ENCODE measurements at regions of chr3 and their contacts with region 1.

Region 1: DNA sequence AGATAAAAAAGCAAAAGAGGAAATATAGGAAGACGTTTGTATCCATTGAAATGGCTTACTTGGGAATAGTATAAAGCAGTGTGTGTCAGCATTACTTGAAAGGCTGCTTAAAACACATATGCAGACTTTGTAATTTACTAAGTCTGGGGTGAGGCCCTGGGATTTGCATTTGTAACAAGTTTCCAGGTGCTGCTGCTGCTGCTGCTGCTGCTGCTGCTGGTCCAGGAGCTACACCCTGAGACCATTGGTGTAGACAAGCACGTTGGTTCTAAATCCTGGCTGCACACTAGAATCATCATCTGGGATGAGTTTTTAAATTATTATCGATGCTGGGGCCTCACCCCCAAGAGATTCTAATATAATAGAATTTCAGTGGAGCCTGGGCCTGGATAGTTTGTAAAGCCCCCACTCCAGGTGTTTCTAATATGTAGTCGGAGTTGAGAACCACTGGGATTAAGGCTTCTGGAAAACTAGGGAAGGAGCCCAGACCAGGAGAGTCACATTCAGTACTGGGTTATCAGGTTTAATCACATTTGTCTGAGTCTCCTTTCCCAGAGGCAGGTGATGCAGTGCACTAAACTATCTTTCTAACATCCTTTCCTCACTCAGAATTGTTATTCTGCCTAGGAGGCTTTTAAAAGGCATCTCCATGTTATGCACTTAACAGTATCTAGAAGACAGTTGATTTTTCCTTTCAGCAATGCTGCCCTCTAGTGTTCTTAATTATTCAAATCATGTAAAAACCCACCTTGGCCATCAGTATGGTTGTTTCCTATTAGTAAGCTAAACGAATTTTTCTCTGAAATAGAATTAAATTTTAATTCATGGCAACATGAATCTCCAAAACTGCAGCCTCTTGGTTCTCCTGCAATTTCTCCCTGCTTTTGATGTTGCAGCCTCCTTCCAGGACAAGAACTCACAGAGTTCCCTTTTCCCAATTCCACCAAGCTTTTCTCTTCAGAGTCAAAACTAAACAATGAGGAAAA is 45.4 kb downstream of the SSR3 start:
- DNase-seq: peak; percentile 67 to 83 (median 75)
- H3K4me3 ChIP-seq: no peak overlapping the region
- H3K27ac ChIP-seq: no peak overlapping the region
- H3K4me1 ChIP-seq: no peaks in the 10 kb centered on the region
- H3K27me3 ChIP-seq: peaks cover 0 to 3% (median 0%) of the 10 kb centered on the region in 5 experiments

Region 2: GRCh38 chr3:156098437-156099035 is 410.9 kb before region 1 on chr3:
- CTCF ChIA-PET with region 1: no interaction called
- POLR2A ChIA-PET with region 1: no interaction called
- DNase-seq: no peak
- H3K4me3 ChIP-seq: no peak overlapping the region
- H3K27ac ChIP-seq: no peak overlapping the region
- H3K4me1 ChIP-seq: no peaks in the 10 kb centered on the region
- H3K27me3 ChIP-seq: no peaks in the 10 kb centered on the region

Region 3: DNA sequence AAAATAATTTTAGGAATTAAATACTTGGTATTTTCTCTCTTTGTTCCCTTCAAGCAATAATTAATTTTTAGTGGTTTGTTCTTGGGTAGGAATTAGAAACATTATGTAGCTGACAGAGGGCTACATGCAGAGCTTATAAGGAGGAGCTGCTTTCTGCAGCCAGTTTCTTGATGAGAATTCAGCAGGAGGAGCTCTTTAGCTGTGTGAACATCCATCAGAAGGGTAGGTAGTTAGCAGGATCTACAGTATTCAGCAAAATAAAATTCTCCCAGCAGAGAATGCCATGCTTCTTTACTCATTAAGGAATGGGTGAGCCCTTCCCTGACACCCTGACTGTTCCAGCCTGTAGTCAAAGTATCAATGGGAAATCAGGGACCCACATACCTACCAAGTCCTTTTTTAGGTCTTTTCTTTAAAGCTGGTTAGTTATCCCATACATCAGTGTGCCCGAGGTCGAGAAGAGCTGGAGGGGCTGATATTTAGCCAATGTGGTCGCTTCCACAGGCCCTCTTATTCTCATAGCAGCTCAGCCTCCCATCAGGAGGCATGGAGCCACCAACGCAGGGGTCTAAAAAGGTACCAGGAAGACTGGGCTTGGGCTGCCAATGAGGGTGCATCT is 335.1 kb before region 1 on chr3:
- CTCF ChIA-PET with region 1: interaction called, 14 read pairs
- POLR2A ChIA-PET with region 1: no interaction called
- DNase-seq: peak; percentile 8 to 39 (median 19)
- H3K4me3 ChIP-seq: no peak overlapping the region
- H3K27ac ChIP-seq: no peak overlapping the region
- H3K4me1 ChIP-seq: no peaks in the 10 kb centered on the region
- H3K27me3 ChIP-seq: no peaks in the 10 kb centered on the region

Region 4: GRCh38 chr3:156413293-156413892 is 96.1 kb before region 1 on chr3:
- CTCF ChIA-PET with region 1: no interaction called
- POLR2A ChIA-PET with region 1: no interaction called
- DNase-seq: no peak
- H3K4me3 ChIP-seq: no peak overlapping the region
- H3K27ac ChIP-seq: no peak overlapping the region
- H3K4me1 ChIP-seq: no peaks in the 10 kb centered on the region
- H3K27me3 ChIP-seq: peaks cover 0 to 1% (median 0%) of the 10 kb centered on the region in 5 experiments

Region 5: GRCh38 chr3:156449712-156450574 is 59.5 kb before region 1 on chr3:
- CTCF ChIA-PET with region 1: interaction called, 31 read pairs
- POLR2A ChIA-PET with region 1: interaction called, 3 read pairs
- DNase-seq: peak; percentile 38 to 48 (median 39)
- H3K4me3 ChIP-seq: no peak overlapping the region
- H3K27ac ChIP-seq: no peak overlapping the region
- H3K4me1 ChIP-seq: peaks cover 0 to 13% (median 1%) of the 10 kb centered on the region in 4 experiments
- H3K27me3 ChIP-seq: no peaks in the 10 kb centered on the region

Region 6: GRCh38 chr3:156474560-156475389 is 34.7 kb before region 1 on chr3:
- CTCF ChIA-PET with region 1: interaction called, 10 read pairs
- POLR2A ChIA-PET with region 1: no interaction called
- DNase-seq: peak; percentile 22 to 41 (median 29)
- H3K4me3 ChIP-seq: peak overlapping the region in 1 of 7 experiments; percentile 31
- H3K27ac ChIP-seq: no peak overlapping the region
- H3K4me1 ChIP-seq: no peaks in the 10 kb centered on the region
- H3K27me3 ChIP-seq: no peaks in the 10 kb centered on the region

Region 7: DNA sequence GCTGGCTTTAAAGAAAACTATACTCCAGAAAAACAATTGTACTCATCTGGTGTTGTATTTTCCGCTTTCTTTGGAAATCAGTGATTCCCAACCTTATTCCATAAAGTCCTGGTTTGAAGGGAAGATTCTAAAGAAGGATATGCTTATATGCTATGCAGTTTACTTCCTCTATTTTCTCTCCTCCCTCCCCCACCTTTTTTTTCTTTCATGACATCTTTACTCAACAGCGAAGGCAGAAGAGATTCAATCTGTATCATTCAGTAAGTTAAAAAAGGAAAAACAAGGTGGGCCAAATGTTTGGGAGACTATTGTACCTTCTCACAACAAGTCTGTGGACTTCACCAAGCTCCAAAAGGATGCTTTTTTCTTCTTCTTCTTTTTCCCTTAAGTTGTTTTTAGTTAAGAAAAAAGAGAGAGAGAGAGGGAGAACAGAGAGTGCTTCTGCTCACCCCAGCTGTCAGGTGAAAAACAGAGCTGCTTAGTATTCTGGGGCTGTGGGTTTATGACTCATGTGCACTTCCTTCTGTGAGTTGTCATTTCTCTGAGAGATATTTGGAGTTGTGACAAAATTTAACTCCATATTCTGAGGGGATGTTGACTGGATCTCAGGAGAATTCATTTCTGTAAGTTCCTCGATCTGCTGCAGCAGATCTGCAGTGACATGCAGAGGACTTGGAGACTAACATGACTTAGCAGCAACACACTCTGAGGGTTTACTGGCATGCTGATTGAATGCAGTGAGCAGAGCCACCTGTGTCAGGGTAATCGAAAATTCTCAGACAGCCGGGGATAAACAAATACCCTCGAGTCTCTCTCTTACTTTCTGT is 25.3 kb before region 1 on chr3:
- CTCF ChIA-PET with region 1: interaction called, 38 read pairs
- POLR2A ChIA-PET with region 1: no interaction called
- DNase-seq: peak; percentile 84 to 96 (median 94)
- H3K4me3 ChIP-seq: peak overlapping the region in 6 of 7 experiments; percentile 20 to 59 (median 45)
- H3K27ac ChIP-seq: peak overlapping the region; percentile 29 to 68
- H3K4me1 ChIP-seq: peaks cover 13 to 25% (median 22%) of the 10 kb centered on the region in 4 experiments
- H3K27me3 ChIP-seq: no peaks in the 10 kb centered on the region

Region 8: DNA sequence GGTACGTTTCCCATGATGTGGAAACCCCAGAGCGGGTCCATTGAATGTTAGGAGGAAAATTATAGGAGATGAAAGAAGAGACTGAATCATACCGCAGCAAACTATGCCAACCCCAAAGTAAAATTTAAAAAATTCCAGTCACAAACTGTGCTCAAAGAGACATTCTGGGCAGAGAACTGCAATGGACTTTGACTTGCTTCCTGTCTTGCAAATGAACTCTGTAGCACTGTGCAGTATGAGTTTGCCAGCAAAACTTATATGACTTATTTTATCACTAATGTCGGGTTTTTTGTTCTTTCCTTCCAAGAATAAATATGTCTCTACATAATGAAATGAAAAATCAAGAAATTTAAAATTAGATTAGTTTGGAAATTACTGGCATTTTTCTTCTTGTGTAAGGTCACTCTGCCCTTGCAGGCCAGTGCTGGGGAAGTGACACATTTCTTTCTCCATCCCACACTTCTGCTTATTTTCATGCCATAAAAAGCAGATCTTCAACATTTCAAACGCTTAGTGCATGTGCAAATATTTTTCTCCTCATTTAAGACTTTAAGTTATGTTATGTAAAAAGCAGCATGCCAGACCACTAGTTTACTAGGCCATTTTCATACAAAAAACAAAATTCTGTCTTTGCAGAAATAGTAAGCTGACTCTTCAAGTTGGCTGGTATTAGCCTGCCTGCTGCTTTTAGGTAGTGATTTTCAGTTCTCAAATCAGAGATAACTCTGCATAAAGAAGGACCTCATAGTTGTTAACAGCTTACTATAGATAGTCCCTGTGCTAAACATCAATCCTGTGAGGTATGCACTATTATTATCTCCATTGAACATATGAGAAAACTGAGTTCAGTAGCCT is 77.7 kb after region 1 on chr3:
- CTCF ChIA-PET with region 1: no interaction called
- POLR2A ChIA-PET with region 1: no interaction called
- DNase-seq: peak in 2 of 3 donors; percentile 40 to 47
- H3K4me3 ChIP-seq: no peak overlapping the region
- H3K27ac ChIP-seq: no peak overlapping the region
- H3K4me1 ChIP-seq: peaks cover 0 to 30% (median 5%) of the 10 kb centered on the region in 4 experiments
- H3K27me3 ChIP-seq: no peaks in the 10 kb centered on the region

Measured in common myeloid progenitor, CD34-positive (primary cell).